ENCODE measurements at regions of chr17 and their contacts with region 1.

Region 1: DNA sequence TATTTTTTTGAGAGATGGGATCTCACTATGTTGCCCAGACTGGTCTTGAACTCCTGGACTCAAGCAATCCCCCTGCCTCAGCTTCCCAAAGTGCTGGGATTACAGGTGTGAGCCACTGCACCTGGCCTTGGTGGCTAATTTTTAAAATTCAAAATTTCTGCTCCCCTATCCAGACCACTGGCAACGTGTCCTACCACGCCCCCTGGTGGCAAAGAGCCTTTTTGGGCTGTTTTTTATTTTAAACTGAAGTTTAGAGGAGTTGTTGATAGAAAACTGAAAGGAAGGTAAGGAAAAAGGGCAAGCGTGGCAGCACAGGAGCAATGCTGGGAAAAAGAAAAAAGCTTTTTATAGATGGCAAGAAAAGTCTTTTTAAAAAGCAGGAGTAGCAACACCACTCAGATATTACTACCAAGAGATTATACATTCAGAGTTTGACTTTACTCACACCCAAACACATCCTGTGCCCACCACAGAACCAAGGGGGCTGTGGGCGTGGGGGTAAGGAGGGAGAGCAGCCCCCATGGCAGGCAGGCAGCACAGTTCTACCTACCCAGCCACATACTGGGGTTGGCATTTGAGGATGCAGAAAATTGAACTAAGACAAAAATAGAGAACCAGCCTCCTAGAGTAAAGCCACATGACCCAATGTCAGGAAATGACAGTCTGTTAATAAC is 4.2 kb upstream of the MXRA7 start:
- DNase-seq: peak; percentile 70 to 78
- ATAC-seq: no peak
- H3K4me3 ChIP-seq: no peak overlapping the region
- H3K27ac ChIP-seq: peak overlapping the region; percentile 89
- H3K4me1 ChIP-seq: peaks cover 42% of the 10 kb centered on the region
- H3K27me3 ChIP-seq: no peaks in the 10 kb centered on the region
- CTCF ChIP-seq: peak; percentile 81

Region 2: DNA sequence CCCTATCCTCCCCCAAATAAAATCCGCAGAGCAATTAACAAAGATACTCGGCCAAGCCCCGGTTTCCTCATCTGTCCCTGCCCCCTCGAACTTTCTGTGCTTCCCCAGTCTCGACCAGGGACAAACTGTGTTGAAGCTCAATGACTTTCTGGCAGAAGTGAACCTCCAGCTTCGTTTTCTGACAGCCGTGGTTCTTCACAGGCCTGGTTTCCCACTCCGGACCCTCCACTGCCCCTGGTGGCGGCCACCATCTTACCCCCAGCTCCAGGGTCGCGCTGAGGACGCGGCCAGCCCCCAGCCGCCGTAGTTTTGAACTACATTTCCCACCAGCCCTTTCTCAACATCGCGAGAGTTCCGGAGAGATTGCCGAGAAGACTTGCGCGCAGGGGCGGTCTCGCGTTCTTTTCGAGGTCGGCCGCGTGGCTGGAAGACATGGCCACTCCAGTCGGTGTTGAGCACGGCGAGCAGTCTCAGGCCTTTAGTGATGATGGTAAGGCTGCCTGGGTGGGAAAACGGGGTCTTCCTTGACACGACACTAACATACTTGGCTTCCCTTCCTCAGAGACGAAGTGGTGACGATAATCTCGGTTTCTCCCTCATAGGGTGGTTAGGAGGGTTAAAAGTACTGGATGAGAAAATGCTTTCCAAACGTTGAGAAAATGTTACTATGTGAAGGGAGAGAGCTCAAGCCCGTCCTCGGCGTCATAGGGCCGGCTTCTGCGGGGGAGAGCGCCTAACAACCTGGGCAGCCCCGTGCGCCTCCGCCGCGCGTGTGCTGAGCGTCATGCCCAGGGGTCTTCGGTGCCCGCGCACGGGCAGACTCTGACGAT is 157.4 kb before region 1 on chr17:
- intact Hi-C with region 1: loop called in 1 of 2 experiments (anchors 5 kb)
- DNase-seq: peak; percentile 93 to 97
- ATAC-seq: peak; percentile 92 to 94 (median 93)
- H3K4me3 ChIP-seq: peak overlapping the region; percentile 82
- H3K27ac ChIP-seq: peak overlapping the region; percentile 86
- H3K4me1 ChIP-seq: peaks cover 55% of the 10 kb centered on the region
- H3K27me3 ChIP-seq: no peaks in the 10 kb centered on the region
- CTCF ChIP-seq: peak; percentile 60

Region 3: DNA sequence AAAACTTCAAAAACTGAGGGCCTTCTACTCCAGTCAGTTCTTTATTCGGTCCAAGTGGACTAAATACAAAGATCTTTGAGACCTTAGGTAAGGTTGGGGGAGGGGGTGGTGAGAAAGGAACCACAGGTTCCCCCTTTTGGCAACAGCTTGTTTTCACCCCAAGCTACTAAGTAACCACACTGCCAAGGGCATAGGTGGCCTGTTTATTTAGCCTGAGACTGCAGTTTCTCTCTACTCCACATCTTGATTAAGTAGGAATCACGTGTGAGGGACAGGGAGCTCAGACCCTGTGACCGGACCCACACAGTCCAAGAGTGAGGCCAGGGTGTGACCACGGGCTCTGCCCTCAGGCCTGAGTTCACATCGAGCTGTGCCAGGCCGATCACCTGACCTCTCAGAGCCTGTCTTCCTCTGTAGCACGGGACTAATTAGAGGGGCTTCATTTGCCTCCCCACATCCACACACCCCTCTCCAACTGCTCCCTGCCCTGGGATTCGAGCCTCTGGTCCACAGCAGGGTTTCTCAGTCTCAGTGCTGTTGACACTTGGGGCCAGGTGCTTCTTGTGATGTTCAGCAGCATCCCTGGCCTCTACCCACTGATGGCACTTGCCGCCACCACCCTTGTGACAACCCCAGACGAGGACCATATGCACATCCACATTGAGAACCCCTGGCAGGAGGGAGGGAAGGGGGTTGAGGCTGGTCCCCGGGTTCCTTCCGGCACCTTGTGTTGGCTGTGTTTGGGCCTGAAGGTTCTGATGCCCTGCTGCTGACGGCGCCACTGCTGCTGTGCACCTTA is 147.1 kb before region 1 on chr17:
- intact Hi-C with region 1: no loop called
- DNase-seq: no peak
- ATAC-seq: peak; percentile 18 to 48 (median 47)
- H3K4me3 ChIP-seq: no peak overlapping the region
- H3K27ac ChIP-seq: no peak overlapping the region
- H3K4me1 ChIP-seq: peaks cover 38% of the 10 kb centered on the region
- H3K27me3 ChIP-seq: no peaks in the 10 kb centered on the region
- CTCF ChIP-seq: no peak